Natural killer cell (primary cell): ENCODE measurements at regions of chr9 and their contacts with region 1.

Region 1: GRCh38 chr9:36487482-36488388 is 85.0 kb upstream of the MELK start:
- DNase-seq: peak; percentile 83 to 95
- ATAC-seq: peak; percentile 81 to 94 (median 85)
- H3K4me3 ChIP-seq: peak overlapping the region; percentile 88
- H3K4me3 Mint-ChIP-seq: peak overlapping the region; percentile 96
- H3K27ac ChIP-seq: peak overlapping the region; percentile 98
- H3K27ac Mint-ChIP-seq: peak overlapping the region; percentile 92 to 95
- H3K4me1 ChIP-seq: peaks cover 32% of the 10 kb centered on the region
- H3K4me1 Mint-ChIP-seq: peaks cover 36 to 55% of the 10 kb centered on the region in 2 donors
- H3K27me3 ChIP-seq: no peaks in the 10 kb centered on the region
- H3K27me3 Mint-ChIP-seq: no peaks in the 10 kb centered on the region
- CTCF ChIP-seq: no peak

Region 2: GRCh38 chr9:36357639-36358038 is 130.1 kb before region 1 on chr9:
- intact Hi-C with region 1: no loop called
- DNase-seq: no peak
- ATAC-seq: no peak
- H3K4me3 ChIP-seq: no peak overlapping the region
- H3K4me3 Mint-ChIP-seq: no peak overlapping the region
- H3K27ac ChIP-seq: no peak overlapping the region
- H3K27ac Mint-ChIP-seq: peak overlapping the region; percentile 24 to 57
- H3K4me1 ChIP-seq: no peaks in the 10 kb centered on the region
- H3K4me1 Mint-ChIP-seq: peaks cover 4 to 10% of the 10 kb centered on the region in 2 donors
- H3K27me3 ChIP-seq: no peaks in the 10 kb centered on the region
- H3K27me3 Mint-ChIP-seq: no peaks in the 10 kb centered on the region
- CTCF ChIP-seq: no peak

Region 3: DNA sequence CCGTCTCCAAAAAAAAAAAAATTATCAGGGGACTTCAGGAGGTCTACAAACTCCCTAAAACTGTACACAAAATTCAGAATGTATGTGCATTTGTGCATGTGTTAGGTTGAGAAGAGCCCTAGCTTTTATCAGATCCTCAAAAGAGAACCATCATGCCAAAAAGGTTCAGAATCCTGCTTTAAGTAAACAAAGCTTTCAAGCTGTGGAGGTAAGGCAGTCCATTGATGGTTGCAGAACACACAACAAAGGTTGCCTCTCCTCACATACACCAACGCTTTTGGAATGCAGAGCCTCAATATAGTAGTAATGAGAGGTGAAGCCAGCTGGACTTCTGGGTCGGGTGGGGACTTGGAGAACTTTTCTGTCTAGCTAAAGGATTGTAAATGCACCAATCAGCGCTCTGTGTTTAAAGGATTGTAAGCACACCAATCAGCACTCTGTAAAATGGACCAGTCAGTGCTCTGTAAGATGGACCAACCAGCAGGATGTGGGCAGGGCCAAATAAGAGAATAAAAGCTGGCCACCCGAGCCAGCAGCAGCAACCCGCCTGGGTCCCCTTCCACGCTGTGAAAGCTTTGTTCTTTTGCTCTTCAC is 29.8 kb before region 1 on chr9:
- intact Hi-C with region 1: loop called (anchors 2 kb)
- DNase-seq: no peak
- ATAC-seq: peak; percentile 33 to 41 (median 40)
- H3K4me3 ChIP-seq: no peak overlapping the region
- H3K4me3 Mint-ChIP-seq: peak overlapping the region; percentile 76
- H3K27ac ChIP-seq: peak overlapping the region; percentile 50
- H3K27ac Mint-ChIP-seq: peak overlapping the region; percentile 90 to 92
- H3K4me1 ChIP-seq: peaks cover 46% of the 10 kb centered on the region
- H3K4me1 Mint-ChIP-seq: peaks cover 50 to 53% of the 10 kb centered on the region in 2 donors
- H3K27me3 ChIP-seq: no peaks in the 10 kb centered on the region
- H3K27me3 Mint-ChIP-seq: no peaks in the 10 kb centered on the region
- CTCF ChIP-seq: no peak

Region 4: GRCh38 chr9:36470643-36471290 is 17.0 kb before region 1 on chr9:
- intact Hi-C with region 1: loop called (anchors 2 kb)
- DNase-seq: peak; percentile 43 to 83
- ATAC-seq: peak; percentile 90 to 95 (median 91)
- H3K4me3 ChIP-seq: peak overlapping the region; percentile 32
- H3K4me3 Mint-ChIP-seq: peak overlapping the region; percentile 90
- H3K27ac ChIP-seq: peak overlapping the region; percentile 78
- H3K27ac Mint-ChIP-seq: peak overlapping the region; percentile 84 to 94
- H3K4me1 ChIP-seq: peaks cover 19% of the 10 kb centered on the region
- H3K4me1 Mint-ChIP-seq: peaks cover 27 to 34% of the 10 kb centered on the region in 2 donors
- H3K27me3 ChIP-seq: no peaks in the 10 kb centered on the region
- H3K27me3 Mint-ChIP-seq: no peaks in the 10 kb centered on the region
- CTCF ChIP-seq: no peak

Region 5: GRCh38 chr9:36499174-36499890 is 11.6 kb after region 1 on chr9:
- intact Hi-C with region 1: no loop called
- DNase-seq: no peak
- ATAC-seq: no peak
- H3K4me3 ChIP-seq: no peak overlapping the region
- H3K4me3 Mint-ChIP-seq: no peak overlapping the region
- H3K27ac ChIP-seq: no peak overlapping the region
- H3K27ac Mint-ChIP-seq: no peak overlapping the region
- H3K4me1 ChIP-seq: peaks cover 6% of the 10 kb centered on the region
- H3K4me1 Mint-ChIP-seq: peaks cover 7 to 9% of the 10 kb centered on the region in 2 donors
- H3K27me3 ChIP-seq: no peaks in the 10 kb centered on the region
- H3K27me3 Mint-ChIP-seq: no peaks in the 10 kb centered on the region
- CTCF ChIP-seq: no peak